GM23248 (cell line): ENCODE measurements at regions of chr12 and their contacts with region 1.

Region 1: GRCh38 chr12:65306366-65307168 is 28.1 kb downstream of the MSRB3 start:
- DNase-seq: peak; percentile 69
- H3K4me3 ChIP-seq: no peak overlapping the region
- H3K27ac ChIP-seq: peak overlapping the region; percentile 58
- H3K4me1 ChIP-seq: peaks cover 54% of the 10 kb centered on the region
- H3K27me3 ChIP-seq: no peaks in the 10 kb centered on the region

Region 2: GRCh38 chr12:65685514-65685913 is 378.9 kb after region 1 on chr12:
- in situ Hi-C with region 1: loop called (anchors 25 kb)
- DNase-seq: peak; percentile 62
- H3K4me3 ChIP-seq: no peak overlapping the region
- H3K27ac ChIP-seq: no peak overlapping the region
- H3K4me1 ChIP-seq: peaks cover 6% of the 10 kb centered on the region; the same call in 1 of the 2 replicates
- H3K27me3 ChIP-seq: no peaks in the 10 kb centered on the region

Region 3: GRCh38 chr12:66087365-66087943 is 780.9 kb after region 1 on chr12:
- in situ Hi-C with region 1: loop called (anchors 10 kb)
- DNase-seq: peak; percentile 78
- H3K4me3 ChIP-seq: peak overlapping the region; percentile 42
- H3K27ac ChIP-seq: no peak overlapping the region
- H3K4me1 ChIP-seq: peaks cover 12% of the 10 kb centered on the region
- H3K27me3 ChIP-seq: no peaks in the 10 kb centered on the region